ENCODE measurements at regions of chr20 and their contacts with region 1.

Region 1: DNA sequence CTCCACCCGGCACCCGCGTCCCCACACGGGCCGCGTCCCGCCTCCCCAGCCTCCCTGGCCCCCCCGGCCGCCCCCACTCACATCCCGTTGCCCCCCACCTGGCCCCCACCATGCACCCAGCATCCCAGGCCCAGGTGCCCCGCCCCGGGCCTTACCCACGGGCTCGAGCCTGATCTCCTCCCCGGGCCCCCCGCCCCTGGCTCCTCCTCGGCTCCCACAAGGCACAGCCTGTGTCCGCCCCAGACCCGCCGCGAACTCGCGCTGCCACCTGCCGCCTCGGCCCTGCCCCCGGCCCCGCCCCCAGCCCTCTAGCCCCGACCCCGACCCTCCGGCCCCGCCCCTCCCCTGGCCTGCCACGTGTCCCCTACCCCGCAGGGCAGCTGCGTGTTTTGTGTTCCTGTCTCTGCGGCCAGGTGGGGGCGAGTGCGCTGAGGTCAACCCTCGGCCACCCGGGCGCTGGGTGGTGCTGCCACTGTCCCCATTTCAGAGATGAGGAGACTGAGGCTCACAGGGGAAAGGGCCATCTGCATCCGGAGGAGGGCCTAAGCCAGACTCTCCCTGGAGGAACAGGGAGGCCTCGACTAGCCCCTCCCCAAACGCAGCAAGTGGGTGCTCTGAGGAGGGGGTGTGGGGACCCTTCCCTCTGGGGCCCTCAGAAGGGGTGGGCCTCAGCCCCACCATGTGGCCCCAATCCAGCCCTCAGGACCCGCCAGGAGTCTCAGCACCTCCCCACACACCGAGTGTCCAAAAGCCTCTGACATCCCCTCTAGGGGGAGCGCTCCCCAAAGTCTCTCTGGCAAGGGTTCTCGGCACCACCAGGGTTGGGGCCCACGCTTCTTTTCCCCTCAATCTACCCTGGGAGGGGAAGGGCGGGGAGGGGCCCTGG is 99.8 kb downstream of the TAF4 start:
- DNase-seq: no peak
- ATAC-seq: peak; percentile 62
- H3K4me3 ChIP-seq: no peak overlapping the region
- H3K27ac ChIP-seq: no peak overlapping the region
- H3K4me1 ChIP-seq: no peaks in the 10 kb centered on the region
- H3K27me3 ChIP-seq: no peaks in the 10 kb centered on the region; a peak in 1 of 4 replicates
- CTCF ChIP-seq: no peak
- EP300 ChIP-seq: no peak
- POLR2A ChIP-seq: no peak
- RAD21 ChIP-seq: no peak

Region 2: GRCh38 chr20:61918548-61918947 is 47.3 kb before region 1 on chr20:
- CTCF ChIA-PET with region 1: no interaction called
- POLR2A ChIA-PET with region 1: no interaction called
- RAD21 ChIA-PET with region 1: no interaction called
- SMC1A ChIA-PET with region 1: no interaction called
- in situ Hi-C with region 1: loop called (anchors 5 kb)
- intact Hi-C with region 1: no loop called
- DNase-seq: no peak
- ATAC-seq: no peak
- H3K4me3 ChIP-seq: no peak overlapping the region
- H3K27ac ChIP-seq: no peak overlapping the region
- H3K4me1 ChIP-seq: peaks cover 10% of the 10 kb centered on the region
- H3K27me3 ChIP-seq: no peaks in the 10 kb centered on the region; a peak in 1 of 4 replicates
- CTCF ChIP-seq: no peak
- EP300 ChIP-seq: no peak
- POLR2A ChIP-seq: no peak
- RAD21 ChIP-seq: no peak